ENCODE measurements at regions of chr4 and their contacts with region 1.

Region 1: GRCh38 chr4:166941629-166942028 is 292.7 kb downstream of the SPOCK3 start:
- DNase-seq: no peak
- H3K4me3 ChIP-seq: no peak overlapping the region
- H3K27ac ChIP-seq: no peak overlapping the region
- H3K4me1 ChIP-seq: no peaks in the 10 kb centered on the region
- H3K27me3 ChIP-seq: no peaks in the 10 kb centered on the region
- CTCF ChIP-seq: no peak
- EP300 ChIP-seq: no peak
- POLR2A ChIP-seq: no peak

Region 2: DNA sequence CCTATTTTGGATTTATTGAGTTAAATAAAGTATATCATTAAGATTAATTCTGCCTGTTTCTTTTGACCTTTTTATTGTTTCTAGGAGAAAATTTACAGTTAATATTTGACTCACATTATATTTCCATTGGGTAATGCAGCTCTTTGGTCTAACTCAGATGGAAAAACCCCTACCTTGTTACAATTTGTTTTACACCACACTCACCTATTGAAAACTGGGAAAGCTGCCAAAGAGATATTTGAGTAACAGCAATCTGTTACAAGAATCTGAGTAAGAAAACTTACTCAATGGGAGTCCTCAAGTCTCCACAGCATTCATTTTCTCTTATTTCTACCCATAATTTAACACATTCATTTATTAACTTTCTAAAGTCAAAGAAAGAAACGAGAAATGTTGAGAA is 1176.6 kb before region 1 on chr4:
- in situ Hi-C with region 1: no loop called
- intact Hi-C with region 1: no loop called
- DNase-seq: no peak
- H3K4me3 ChIP-seq: no peak overlapping the region
- H3K27ac ChIP-seq: no peak overlapping the region
- H3K4me1 ChIP-seq: no peaks in the 10 kb centered on the region
- H3K27me3 ChIP-seq: no peaks in the 10 kb centered on the region
- CTCF ChIP-seq: no peak
- EP300 ChIP-seq: no peak
- POLR2A ChIP-seq: no peak

Region 3: DNA sequence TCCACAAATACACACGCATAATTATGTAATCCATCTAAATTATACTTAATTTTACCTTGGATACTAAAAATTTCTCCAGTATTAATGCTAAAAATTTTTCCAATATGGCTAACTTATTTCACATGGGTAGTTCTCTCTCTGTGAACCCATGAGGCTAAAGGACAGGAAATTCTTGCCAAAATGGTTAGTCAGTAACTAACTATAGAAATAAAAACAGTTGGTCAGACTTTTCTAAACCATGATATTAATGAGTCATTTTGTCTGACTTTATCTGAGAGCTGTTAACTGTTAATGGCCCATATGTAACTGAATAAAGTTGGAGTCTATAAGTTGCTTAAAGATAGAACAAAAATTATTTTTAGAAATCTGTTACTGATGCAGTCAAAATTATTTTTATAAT is 519.2 kb before region 1 on chr4:
- in situ Hi-C with region 1: no loop called
- intact Hi-C with region 1: no loop called
- DNase-seq: no peak
- H3K4me3 ChIP-seq: no peak overlapping the region
- H3K27ac ChIP-seq: no peak overlapping the region
- H3K4me1 ChIP-seq: no peaks in the 10 kb centered on the region
- H3K27me3 ChIP-seq: no peaks in the 10 kb centered on the region
- CTCF ChIP-seq: no peak
- EP300 ChIP-seq: no peak
- POLR2A ChIP-seq: no peak

Region 4: DNA sequence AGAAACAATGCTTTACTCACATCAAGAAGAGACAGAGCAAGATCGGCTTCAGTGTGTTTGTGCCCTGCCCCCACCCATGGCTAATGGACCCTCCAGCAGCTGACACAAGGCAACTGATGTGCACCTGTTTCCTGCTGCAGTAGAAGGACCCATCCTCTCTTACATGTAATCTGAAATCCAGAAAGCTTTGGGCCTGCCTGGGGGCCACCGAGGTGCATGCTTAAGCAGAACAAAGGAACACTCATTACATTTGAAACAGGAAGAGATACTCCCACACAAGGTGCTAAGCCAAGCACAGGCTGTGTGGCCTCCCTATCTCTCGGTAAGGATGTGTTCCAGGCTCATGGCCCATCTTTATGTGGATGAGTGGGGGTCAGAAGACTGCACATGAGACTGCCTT is 45.4 kb before region 1 on chr4:
- in situ Hi-C with region 1: no loop called
- intact Hi-C with region 1: no loop called
- DNase-seq: no peak
- H3K4me3 ChIP-seq: no peak overlapping the region
- H3K27ac ChIP-seq: no peak overlapping the region
- H3K4me1 ChIP-seq: no peaks in the 10 kb centered on the region
- H3K27me3 ChIP-seq: no peaks in the 10 kb centered on the region
- CTCF ChIP-seq: no peak
- EP300 ChIP-seq: no peak
- POLR2A ChIP-seq: no peak

Region 5: GRCh38 chr4:166957451-166957850 is 15.8 kb after region 1 on chr4:
- in situ Hi-C with region 1: no loop called
- intact Hi-C with region 1: loop called (anchors 2 kb)
- DNase-seq: no peak
- H3K4me3 ChIP-seq: no peak overlapping the region
- H3K27ac ChIP-seq: no peak overlapping the region
- H3K4me1 ChIP-seq: no peaks in the 10 kb centered on the region
- H3K27me3 ChIP-seq: no peaks in the 10 kb centered on the region
- CTCF ChIP-seq: no peak
- EP300 ChIP-seq: no peak
- POLR2A ChIP-seq: no peak